ENCODE measurements at regions of chr2 and their contacts with region 1.

Region 1: GRCh38 chr2:219278655-219279516 is at the start of gene DNAJB2:
- DNase-seq: peak; percentile 93
- H3K4me3 ChIP-seq: peak within 1 kb of the TSS; percentile 78
- CTCF ChIP-seq: no peak

Region 2: DNA sequence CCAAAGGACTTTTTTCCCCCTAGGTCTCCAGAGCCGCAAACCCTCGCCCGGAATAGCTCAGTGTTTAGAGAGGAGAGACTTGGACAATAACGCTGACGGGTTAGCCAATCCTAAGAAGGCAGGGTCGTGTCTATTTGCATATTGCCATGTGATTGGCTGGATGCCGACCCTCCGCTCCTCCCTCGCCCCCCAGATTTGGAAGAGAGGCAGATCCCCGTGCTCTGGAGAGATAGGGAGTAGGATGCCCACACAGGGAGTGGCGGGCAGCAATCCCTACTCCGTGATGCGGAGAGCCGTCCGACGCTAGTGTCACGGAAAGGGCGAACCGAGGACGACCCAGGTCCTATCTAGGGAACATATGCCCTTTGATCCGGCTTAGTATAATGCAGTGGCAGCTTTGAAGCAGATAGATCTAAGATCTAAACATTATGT is 417.9 kb before region 1 on chr2:
- CTCF ChIA-PET with region 1: no interaction called
- POLR2A ChIA-PET with region 1: no interaction called
- DNase-seq: no peak
- H3K4me3 ChIP-seq: no peak overlapping the region
- CTCF ChIP-seq: no peak

Region 3: DNA sequence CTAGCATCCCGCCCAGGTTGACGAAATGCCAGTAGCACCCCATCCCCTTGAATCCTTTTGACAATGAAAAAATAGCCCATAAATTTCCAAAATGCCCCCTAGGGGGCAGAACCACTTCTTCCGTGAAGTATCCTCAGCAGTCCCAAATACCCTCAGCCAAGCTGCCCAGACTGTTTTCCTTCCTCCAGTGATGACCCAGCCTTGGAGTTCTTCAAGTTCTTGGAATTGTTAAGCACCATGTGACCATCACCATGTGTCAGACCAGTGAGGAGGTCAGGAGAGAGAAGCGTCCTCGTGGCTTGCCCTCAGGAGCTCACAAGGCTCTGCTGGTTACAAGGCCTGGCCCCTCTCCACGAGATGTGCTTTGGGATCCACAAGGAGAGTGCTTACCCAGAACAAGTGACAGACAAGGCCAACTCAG is 107.6 kb before region 1 on chr2:
- CTCF ChIA-PET with region 1: interaction called, 18 read pairs
- POLR2A ChIA-PET with region 1: no interaction called
- DNase-seq: peak; percentile 75
- H3K4me3 ChIP-seq: no peak overlapping the region
- CTCF ChIP-seq: peak; percentile 27

Region 4: DNA sequence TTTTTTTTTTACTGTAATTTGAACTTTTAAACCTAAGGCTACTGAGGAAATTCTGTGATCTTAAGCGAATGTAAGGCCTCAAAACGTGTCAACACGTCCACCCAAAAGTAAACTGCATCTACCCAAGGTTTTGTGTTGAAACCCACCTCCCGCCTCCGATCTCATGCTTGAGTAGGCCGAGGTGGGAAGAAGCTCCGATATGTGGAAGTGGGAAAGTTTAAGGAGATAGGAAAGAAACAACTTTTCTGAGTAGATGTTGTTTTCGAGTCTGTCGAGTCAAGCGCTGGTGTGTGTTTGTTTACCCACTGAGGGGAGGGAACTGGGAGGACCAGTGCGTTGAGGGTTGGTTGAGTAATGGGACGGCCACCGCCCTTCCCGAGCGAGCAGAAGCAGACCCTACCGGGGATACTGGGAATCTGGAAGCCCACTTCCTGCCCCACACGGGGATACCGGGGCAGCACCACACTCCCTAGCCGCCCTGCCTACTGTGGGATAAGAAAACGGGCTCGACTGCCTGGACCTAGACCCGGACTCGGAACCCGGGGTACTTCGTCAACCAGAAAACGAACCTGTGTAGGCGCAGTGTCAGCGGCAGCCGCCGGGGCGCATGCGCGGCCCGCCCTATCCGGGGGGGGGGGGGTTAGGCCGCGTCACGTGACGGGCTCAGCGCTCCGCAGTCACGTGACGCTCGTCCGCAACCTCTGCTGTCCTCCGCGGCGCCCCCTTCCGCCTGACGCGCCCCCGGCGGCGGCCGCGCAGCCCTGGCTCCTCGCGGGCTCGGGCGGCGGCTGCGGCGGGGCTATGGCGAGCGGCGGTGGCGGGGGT is 101.1 kb before region 1 on chr2 and contains the start of gene RETREG2:
- CTCF ChIA-PET with region 1: interaction called, 18 read pairs
- POLR2A ChIA-PET with region 1: interaction called, 3 read pairs
- DNase-seq: no peak
- H3K4me3 ChIP-seq: peak within 1 kb of the TSS; percentile 84
- CTCF ChIP-seq: peak; percentile 65

Region 5: DNA sequence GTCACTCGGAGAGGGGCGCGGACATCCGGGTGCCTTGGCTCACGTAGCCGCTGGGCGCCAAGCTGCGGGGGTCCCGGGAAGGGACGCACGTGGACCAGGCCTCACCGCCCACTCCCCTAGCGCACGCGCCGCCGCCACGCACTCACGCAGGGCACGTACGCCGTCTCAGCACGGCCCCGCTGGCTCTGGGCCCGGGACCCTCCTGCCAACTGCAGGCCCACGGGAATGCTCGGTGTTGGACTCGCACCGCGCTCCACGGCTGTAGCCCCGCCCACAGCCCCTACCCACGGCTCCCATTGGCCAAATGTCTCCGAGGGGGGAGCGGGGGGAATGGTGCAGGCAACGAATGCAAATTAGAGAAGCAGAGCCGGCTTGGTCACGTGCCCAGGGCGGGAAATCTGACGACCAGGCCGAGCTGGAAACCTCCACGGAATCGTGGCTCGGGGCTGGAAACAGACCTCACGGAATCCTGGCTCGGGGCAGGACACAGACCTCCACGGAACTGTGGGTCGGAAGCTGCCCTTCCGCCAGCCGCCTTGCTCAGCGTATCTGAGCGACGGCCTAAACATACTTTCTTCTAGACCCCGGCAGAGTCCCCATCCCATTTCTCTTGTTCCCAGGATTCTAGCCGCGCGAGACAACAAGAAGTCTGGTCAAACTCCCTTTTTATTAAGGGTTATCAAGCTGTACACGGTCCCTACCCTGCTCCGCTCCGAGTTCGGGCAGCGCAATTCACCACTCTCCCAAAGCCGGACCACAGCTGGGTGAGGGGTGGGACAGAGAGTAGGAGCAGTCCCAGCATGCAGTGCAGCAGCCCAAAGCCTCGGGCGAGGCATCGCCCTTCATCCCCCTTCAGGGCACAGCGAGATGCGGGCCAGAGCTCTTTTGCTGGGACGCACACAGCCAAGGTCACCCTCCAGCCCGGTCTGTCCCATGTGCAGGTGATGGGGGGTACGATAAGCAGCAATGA is 59.9 kb before region 1 on chr2 and contains the start of gene ABCB6:
- CTCF ChIA-PET with region 1: interaction called, 6 read pairs
- POLR2A ChIA-PET with region 1: interaction called, 13 read pairs
- DNase-seq: no peak
- H3K4me3 ChIP-seq: peak within 1 kb of the TSS; percentile 69
- CTCF ChIP-seq: no peak

Region 6: DNA sequence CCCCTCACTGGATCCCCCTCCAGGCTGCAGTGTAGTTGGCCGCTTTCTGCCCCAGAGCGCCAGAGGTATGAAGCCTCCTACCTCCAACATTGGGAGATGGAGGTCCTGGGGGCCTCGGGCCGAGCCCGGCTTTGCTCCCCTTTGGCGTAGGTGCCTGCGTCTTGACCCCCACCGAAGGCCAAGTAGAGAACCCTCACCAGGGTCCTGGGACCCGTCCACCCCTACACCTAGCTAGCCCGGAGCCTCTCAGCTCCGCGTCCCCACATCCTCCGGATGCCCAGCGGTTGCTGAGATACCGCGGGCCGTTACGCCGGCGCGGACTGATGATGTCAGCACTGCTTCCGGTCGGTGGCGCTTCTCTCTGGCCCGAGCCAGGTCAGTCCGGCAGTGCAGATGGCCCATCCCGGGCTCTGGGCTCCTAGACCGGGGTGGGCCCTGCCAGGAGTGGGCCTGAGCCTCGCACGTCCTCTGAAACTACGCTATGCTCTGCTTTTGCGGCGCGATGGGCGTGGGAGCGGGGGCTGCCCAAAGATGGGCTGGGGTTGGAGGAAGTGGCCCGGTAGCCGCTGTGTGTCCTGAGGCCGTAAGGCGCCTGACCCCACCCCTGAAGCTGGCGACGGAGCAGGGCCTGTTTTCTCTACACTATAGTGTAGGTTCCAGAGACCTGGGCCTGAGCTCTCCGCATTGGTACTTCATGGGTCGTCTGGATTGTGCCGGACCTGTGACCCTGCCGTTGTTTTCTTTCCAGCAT is 33.6 kb before region 1 on chr2 and contains the starts of genes GLB1L and STK16:
- CTCF ChIA-PET with region 1: interaction called, 67 read pairs
- POLR2A ChIA-PET with region 1: interaction called, 17 read pairs
- DNase-seq: peak; percentile 57
- H3K4me3 ChIP-seq: peak within 1 kb of the TSS; percentile 98
- CTCF ChIP-seq: no peak

Region 7: GRCh38 chr2:219253753-219254590 is 24.9 kb before region 1 on chr2 and contains the start of gene TUBA4A:
- CTCF ChIA-PET with region 1: interaction called, 67 read pairs
- POLR2A ChIA-PET with region 1: interaction called, 6 read pairs
- DNase-seq: no peak
- H3K4me3 ChIP-seq: peak within 1 kb of the TSS; percentile 57
- CTCF ChIP-seq: no peak

Region 8: GRCh38 chr2:219261024-219261855 is 17.6 kb before region 1 on chr2:
- CTCF ChIA-PET with region 1: interaction called, 55 read pairs
- POLR2A ChIA-PET with region 1: interaction called, 4 read pairs
- DNase-seq: no peak
- H3K4me3 ChIP-seq: no peak overlapping the region
- CTCF ChIP-seq: no peak

Measured in AG04449 (cell line).